A549 (cell line): ENCODE measurements at regions of chr1 and their contacts with region 1.

Region 1: GRCh38 chr1:153626922-153627796 is at the start of gene S100A13:
- DNase-seq: peak; percentile 85 to 91
- ATAC-seq: peak; percentile 80 to 87
- H3K4me3 ChIP-seq: peak within 1 kb of the TSS; percentile 57
- H3K27ac ChIP-seq: peak within 1 kb of the TSS; percentile 92
- H3K4me1 ChIP-seq: peaks cover 18% of the 10 kb centered on the region
- CTCF ChIP-seq: peak; percentile 73
- EP300 ChIP-seq: no peak
- POLR2A ChIP-seq: peak; percentile 75
- RAD21 ChIP-seq: peak; percentile 54 to 72
- polyA plus RNA-seq, gene S100A13: 98.9 and 113 TPM in 2 replicates

Region 2: DNA sequence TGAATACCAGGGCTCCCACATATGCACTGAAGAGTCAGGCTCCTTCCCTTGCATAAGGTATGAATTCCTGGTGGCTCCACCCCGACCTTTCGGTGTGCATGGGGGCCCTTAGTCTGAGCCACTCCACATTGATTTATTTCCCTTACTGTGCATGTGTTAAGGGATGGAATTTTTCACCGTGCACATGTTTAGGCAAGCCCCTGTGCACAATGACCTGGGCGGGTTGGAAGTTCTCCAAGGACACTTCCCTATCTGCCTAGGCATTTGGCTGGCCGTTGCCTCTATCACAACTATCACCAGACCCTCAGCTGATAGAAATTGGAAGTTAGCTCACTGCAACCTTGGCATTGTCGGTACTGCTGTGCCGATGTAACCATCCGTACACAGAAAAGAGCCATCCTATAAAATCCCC is 101.0 kb before region 1 on chr1:
- CTCF ChIA-PET with region 1: interaction called, 63 read pairs
- POLR2A ChIA-PET with region 1: no interaction called
- DNase-seq: no peak
- ATAC-seq: peak; percentile 26 to 40; a peak in 3 of 6 replicates
- H3K4me3 ChIP-seq: no peak overlapping the region
- H3K27ac ChIP-seq: peak overlapping the region in 1 of 2 experiments; percentile 34; a peak in 3 of 6 replicates
- H3K4me1 ChIP-seq: no peaks in the 10 kb centered on the region
- CTCF ChIP-seq: no peak
- EP300 ChIP-seq: no peak
- POLR2A ChIP-seq: no peak
- RAD21 ChIP-seq: no peak

Region 3: GRCh38 chr1:153592748-153593147 is 34.4 kb before region 1 on chr1:
- CTCF ChIA-PET with region 1: interaction called, 21 read pairs
- POLR2A ChIA-PET with region 1: interaction called, 4 read pairs
- DNase-seq: no peak
- ATAC-seq: no peak
- H3K4me3 ChIP-seq: no peak overlapping the region
- H3K27ac ChIP-seq: no peak overlapping the region
- H3K4me1 ChIP-seq: peaks cover 8% of the 10 kb centered on the region
- CTCF ChIP-seq: no peak
- EP300 ChIP-seq: no peak
- POLR2A ChIP-seq: no peak
- RAD21 ChIP-seq: no peak

Region 4: DNA sequence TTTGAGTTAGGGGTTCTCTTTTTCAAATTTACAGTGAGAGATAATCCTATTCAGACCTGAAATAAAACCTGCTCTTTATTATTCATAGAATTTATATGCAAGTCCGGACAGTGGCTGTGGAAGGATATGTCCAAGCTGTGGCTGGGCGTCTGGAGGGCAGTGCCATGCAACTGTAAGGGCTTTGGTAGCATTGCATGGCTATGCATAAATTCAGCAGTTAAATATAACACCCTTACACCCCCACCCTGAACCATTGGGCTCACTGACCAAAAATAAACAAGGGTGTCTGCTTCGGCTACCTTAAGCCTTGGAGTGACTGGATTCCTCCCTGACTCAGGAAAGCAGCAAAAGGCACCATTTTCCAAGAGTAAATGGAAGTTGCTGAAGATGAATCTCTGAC is 12.1 kb after region 1 on chr1:
- CTCF ChIA-PET with region 1: interaction called, 22 read pairs
- POLR2A ChIA-PET with region 1: interaction called, 9 read pairs
- DNase-seq: no peak
- ATAC-seq: no peak
- H3K4me3 ChIP-seq: no peak overlapping the region
- H3K27ac ChIP-seq: no peak overlapping the region
- H3K4me1 ChIP-seq: peaks cover 24% of the 10 kb centered on the region
- CTCF ChIP-seq: no peak
- EP300 ChIP-seq: no peak
- POLR2A ChIP-seq: no peak
- RAD21 ChIP-seq: no peak

Region 5: GRCh38 chr1:153677718-153678505 is 50.8 kb after region 1 on chr1:
- CTCF ChIA-PET with region 1: no interaction called
- POLR2A ChIA-PET with region 1: no interaction called
- DNase-seq: peak; percentile 68 to 69
- ATAC-seq: peak; percentile 65 to 79; a peak in 5 of 6 replicates
- H3K4me3 ChIP-seq: peak overlapping the region; percentile 48
- H3K27ac ChIP-seq: peak overlapping the region in 1 of 2 experiments; percentile 81; a peak in 5 of 6 replicates
- H3K4me1 ChIP-seq: peaks cover 11% of the 10 kb centered on the region; the same call in 2 of the 3 replicates
- CTCF ChIP-seq: peak; percentile 94
- EP300 ChIP-seq: no peak
- POLR2A ChIP-seq: no peak
- RAD21 ChIP-seq: peak; percentile 95

Region 6: DNA sequence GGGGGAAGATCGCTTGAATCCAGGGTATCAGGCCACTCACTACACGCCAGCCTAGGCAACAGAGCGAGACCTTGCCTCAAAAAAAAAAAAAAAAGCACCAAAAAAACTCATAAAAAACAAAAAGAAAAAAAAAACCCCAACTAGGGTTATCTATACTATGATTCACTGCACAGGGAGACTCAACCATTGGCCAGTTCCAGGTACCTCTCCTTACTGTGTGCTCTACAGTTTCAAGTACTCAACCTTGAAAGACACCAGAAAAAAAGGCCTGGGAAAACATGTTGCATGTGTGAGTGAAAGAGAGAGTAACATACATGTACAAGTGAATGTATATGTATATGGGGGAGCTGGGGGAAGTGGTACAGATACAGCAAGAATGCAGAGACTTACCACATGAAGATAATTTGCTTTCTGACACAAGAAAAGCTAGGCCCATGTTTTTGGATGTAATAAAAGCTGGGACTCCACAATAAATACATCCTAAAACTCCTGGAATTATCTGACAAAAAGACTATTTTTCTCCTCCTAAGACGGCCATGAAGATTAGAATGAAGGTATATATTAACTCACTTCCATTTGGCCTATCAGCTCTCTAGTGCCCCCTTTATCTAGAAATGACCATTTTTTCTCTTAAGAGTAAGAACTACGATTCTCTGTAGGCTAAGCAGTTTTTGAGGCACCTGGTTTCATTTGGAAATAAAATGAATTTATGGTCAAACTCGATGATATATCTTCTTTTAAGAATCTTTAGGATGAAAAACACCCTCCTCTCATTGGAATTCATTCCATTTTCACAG is 200.2 kb after region 1 on chr1:
- CTCF ChIA-PET with region 1: no interaction called
- POLR2A ChIA-PET with region 1: no interaction called
- DNase-seq: no peak
- ATAC-seq: peak in 1 of 2 experiments; percentile 59; a peak in 2 of 6 replicates
- H3K4me3 ChIP-seq: no peak overlapping the region
- H3K27ac ChIP-seq: no peak overlapping the region
- H3K4me1 ChIP-seq: no peaks in the 10 kb centered on the region
- CTCF ChIP-seq: no peak
- EP300 ChIP-seq: no peak
- POLR2A ChIP-seq: no peak
- RAD21 ChIP-seq: no peak

Region 7: DNA sequence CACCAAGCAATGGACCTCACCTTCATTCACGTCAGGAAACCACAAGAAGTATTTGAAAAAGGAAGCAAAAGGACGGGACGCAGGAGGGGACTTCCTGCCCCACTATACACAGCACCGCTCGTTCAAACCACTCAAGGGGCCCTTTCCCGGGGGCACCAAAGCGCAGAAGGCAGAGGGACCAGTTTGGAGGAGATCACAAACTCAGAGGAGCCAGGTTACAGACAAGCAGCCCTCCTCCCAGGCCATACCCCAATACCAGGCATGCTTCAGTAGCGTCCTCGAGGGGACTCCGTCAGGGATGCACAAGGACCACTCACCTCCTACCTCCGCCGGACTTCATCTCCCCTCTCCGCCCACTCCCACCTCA is 330.6 kb after region 1 on chr1:
- CTCF ChIA-PET with region 1: no interaction called
- POLR2A ChIA-PET with region 1: no interaction called
- DNase-seq: no peak
- ATAC-seq: peak; percentile 39 to 47
- H3K4me3 ChIP-seq: peak overlapping the region; percentile 94
- H3K27ac ChIP-seq: peak overlapping the region; percentile 92 to 95
- H3K4me1 ChIP-seq: peaks cover 32% of the 10 kb centered on the region
- CTCF ChIP-seq: no peak; the same call in 2 of the 3 replicates
- EP300 ChIP-seq: no peak
- POLR2A ChIP-seq: no peak
- RAD21 ChIP-seq: no peak

Region 8: DNA sequence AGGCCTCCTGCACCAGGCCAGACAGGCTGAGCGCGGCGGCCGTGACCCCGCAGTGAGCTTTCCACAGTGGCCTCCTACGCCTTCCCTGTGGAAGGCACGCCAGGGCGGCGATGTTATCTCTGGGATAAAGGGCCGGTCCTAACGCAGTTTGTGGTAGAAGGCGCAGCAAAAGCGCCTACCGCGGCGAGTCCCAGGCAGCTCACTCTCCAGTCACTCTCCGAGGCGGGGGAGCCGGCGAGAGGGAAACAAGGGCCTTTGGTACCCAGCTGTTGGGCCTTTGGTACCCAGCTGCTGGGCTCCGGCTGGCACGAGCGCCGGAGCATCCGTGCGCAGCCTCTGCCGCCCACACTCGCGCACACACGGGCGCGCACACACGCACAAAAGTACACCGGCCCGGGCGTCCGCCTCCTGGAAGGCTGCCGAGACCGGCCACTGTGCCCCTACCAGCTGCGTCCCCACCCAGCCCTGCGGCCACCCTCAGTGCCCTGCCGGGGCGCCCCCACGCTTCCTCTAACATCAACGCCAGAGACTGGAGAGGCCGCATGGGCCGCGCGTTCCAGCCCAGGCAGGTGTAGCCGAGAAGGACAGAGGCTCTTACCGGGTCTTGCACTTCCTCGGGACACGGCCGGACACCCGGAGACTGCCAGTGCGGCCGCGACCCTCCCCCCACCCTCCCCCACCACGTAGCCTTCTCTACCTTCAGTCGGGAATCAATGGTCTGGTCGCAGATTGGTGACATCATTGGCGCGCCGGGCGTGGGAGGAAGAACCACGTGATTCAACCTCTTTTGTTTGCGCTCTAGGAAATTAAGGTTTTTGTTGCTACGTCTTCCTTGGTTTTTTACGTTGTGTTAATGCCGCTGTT is 1000.3 kb after region 1 on chr1:
- CTCF ChIA-PET with region 1: no interaction called
- POLR2A ChIA-PET with region 1: no interaction called
- DNase-seq: peak; percentile 78 to 93
- ATAC-seq: peak; percentile 88 to 89
- H3K4me3 ChIP-seq: peak overlapping the region; percentile 88
- H3K27ac ChIP-seq: peak overlapping the region; percentile 91 to 93
- H3K4me1 ChIP-seq: peaks cover 6% of the 10 kb centered on the region; the same call in 1 of the 3 replicates
- CTCF ChIP-seq: no peak
- EP300 ChIP-seq: no peak
- POLR2A ChIP-seq: peak; percentile 29
- RAD21 ChIP-seq: no peak